PC-9 (cell line): ENCODE measurements at regions of chr16 and their contacts with region 1.

Region 1: GRCh38 chr16:50457423-50457822 is 88.6 kb upstream of the BRD7 start:
- DNase-seq: peak; percentile 64 to 88
- H3K4me3 ChIP-seq: no peak overlapping the region
- H3K27ac ChIP-seq: peak overlapping the region; percentile 82
- H3K4me1 ChIP-seq: peaks cover 39% of the 10 kb centered on the region
- H3K27me3 ChIP-seq: no peaks in the 10 kb centered on the region
- CTCF ChIP-seq: no peak

Region 2: GRCh38 chr16:50368410-50369132 is 88.9 kb before region 1 on chr16 and contains the start of gene BRD7:
- CTCF ChIA-PET with region 1: interaction called, 14 read pairs
- POLR2A ChIA-PET with region 1: no interaction called
- intact Hi-C with region 1: no loop called
- DNase-seq: peak; percentile 26 to 62
- H3K4me3 ChIP-seq: peak within 1 kb of the TSS; percentile 71
- H3K27ac ChIP-seq: no peak within 1 kb of the TSS
- H3K4me1 ChIP-seq: peaks cover 18% of the 10 kb centered on the region
- H3K27me3 ChIP-seq: no peaks in the 10 kb centered on the region
- CTCF ChIP-seq: no peak
- total RNA-seq, gene BRD7: 72.1 and 76.6 TPM in 2 replicates

Region 3: GRCh38 chr16:50395763-50396710 is 61.4 kb before region 1 on chr16:
- CTCF ChIA-PET with region 1: no interaction called
- POLR2A ChIA-PET with region 1: no interaction called
- intact Hi-C with region 1: loop called (anchors 1 kb)
- DNase-seq: peak; percentile 37 to 69
- H3K4me3 ChIP-seq: peak overlapping the region; percentile 63
- H3K27ac ChIP-seq: peak overlapping the region; percentile 98
- H3K4me1 ChIP-seq: peaks cover 39% of the 10 kb centered on the region
- H3K27me3 ChIP-seq: no peaks in the 10 kb centered on the region
- CTCF ChIP-seq: no peak

Region 4: DNA sequence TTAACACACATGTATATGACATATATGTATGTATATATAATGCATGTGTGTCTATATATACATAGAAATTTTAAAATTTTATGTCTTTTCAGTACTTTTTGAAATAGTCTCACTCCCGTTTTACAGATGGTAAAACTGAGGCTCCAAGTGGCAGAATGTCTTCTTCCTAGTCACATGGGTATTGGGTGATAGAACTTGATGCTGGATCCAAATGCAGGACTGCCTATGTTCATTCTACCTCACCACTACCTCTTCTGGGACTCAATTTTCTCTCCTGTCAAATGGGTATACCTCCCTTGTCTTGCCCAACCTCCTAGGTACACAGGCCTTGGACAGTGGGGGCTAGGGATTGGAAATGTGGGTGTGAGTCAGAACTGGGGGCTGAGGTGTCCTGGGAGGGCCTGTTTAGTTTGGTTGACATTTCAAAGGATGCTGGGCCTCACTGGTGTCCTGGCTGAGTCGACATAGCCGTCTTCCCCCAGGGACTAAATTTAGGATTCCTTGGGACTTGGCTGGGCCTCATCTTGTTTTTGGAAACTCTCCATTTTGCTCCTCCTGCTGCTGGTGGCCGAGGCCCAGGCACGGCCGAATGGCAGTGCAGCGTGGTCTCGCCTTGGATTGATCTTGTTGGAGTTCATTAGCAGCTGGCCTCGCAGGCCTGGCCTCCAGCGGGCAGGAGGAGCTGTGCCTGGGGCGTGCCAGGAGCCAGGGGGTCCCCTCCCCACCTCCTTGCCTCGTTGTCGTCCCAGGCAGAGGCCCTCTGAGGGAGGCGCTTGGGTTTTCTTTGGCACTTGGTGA is 116.7 kb after region 1 on chr16:
- CTCF ChIA-PET with region 1: no interaction called
- POLR2A ChIA-PET with region 1: no interaction called
- intact Hi-C with region 1: no loop called
- DNase-seq: no peak
- H3K4me3 ChIP-seq: no peak overlapping the region
- H3K27ac ChIP-seq: no peak overlapping the region
- H3K4me1 ChIP-seq: no peaks in the 10 kb centered on the region
- H3K27me3 ChIP-seq: no peaks in the 10 kb centered on the region
- CTCF ChIP-seq: no peak